Caco-2 (cell line): ENCODE measurements at regions of chr9 and their contacts with region 1.

Region 1: GRCh38 chr9:129610473-129611301 is 10.2 kb downstream of the C9orf50 start:
- DNase-seq: peak; percentile 81 to 85
- H3K4me3 ChIP-seq: peak overlapping the region; percentile 67
- H3K4me3 Mint-ChIP-seq: peak overlapping the region; percentile 78
- H3K27ac Mint-ChIP-seq: peak overlapping the region; percentile 59
- H3K4me1 ChIP-seq: peaks cover 19% of the 10 kb centered on the region; the same call in 1 of the 2 replicates
- H3K4me1 Mint-ChIP-seq: peaks cover 9% of the 10 kb centered on the region
- H3K27me3 ChIP-seq: no peaks in the 10 kb centered on the region
- H3K27me3 Mint-ChIP-seq: no peaks in the 10 kb centered on the region
- CTCF ChIP-seq: peak; percentile 85 to 98

Region 2: DNA sequence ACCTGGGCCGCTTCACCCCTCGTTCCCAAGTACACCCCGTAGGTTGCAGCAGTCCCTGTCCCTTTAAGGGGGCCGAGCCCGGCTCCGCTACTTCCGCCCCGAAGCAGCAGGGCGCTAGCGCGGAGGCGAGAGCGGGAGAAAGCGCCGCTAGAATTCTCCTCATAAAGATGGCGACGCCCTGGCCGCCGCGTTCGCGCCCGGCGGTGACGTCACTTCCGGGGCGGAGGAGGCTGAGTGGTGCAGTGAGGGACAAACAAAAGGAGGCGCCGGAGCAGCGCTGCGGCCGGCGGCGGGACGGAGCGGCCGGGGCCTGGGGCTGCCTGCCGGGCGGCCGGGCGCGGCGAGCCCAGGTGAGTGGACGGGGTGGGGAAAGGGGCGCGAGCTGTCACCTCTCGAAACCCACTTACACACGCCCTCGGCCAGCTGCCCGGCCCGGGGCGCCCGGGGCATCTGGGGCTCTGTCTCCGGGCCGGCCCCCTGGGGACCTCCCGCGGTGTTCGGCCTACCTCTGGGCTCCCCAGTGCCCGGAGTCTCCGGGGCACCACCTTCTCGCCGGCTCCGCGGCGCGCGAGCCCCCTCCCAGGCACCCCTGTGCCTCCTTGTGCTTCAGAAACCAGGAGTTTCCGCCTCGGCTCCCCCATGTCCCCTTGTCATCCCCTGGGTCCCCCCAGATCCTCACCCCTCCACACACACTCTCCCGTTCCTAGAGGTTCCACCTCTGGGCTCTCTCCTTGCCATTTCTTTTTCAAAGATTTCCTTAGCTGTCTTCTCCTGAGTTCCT is 728.6 kb before region 1 on chr9 and contains the starts of genes KYAT1 and LRRC8A:
- CTCF ChIA-PET with region 1: no interaction called
- POLR2A ChIA-PET with region 1: no interaction called
- intact Hi-C with region 1: no loop called
- DNase-seq: peak; percentile 95 to 97
- H3K4me3 ChIP-seq: peak within 1 kb of the TSS; percentile 69
- H3K4me3 Mint-ChIP-seq: peak within 1 kb of the TSS; percentile 97
- H3K27ac Mint-ChIP-seq: peak within 1 kb of the TSS; percentile 96
- H3K4me1 ChIP-seq: peaks cover 16% of the 10 kb centered on the region
- H3K4me1 Mint-ChIP-seq: peaks cover 6% of the 10 kb centered on the region
- H3K27me3 ChIP-seq: no peaks in the 10 kb centered on the region
- H3K27me3 Mint-ChIP-seq: no peaks in the 10 kb centered on the region
- CTCF ChIP-seq: peak in 1 of 2 experiments; percentile 1
- total RNA-seq, gene KYAT1: 6.9 and 7.8 TPM in 2 replicates
- total RNA-seq, gene LRRC8A: 21.9 and 22.4 TPM in 2 replicates

Region 3: GRCh38 chr9:129139993-129140396 is 470.7 kb before region 1 on chr9:
- CTCF ChIA-PET with region 1: interaction called, 5 read pairs
- POLR2A ChIA-PET with region 1: no interaction called
- intact Hi-C with region 1: loop called (anchors 2 kb)
- DNase-seq: peak; percentile 41 to 85
- H3K4me3 ChIP-seq: peak overlapping the region; percentile 21
- H3K4me3 Mint-ChIP-seq: peak overlapping the region; percentile 64
- H3K27ac Mint-ChIP-seq: peak overlapping the region; percentile 95
- H3K4me1 ChIP-seq: peaks cover 51% of the 10 kb centered on the region
- H3K4me1 Mint-ChIP-seq: peaks cover 29% of the 10 kb centered on the region
- H3K27me3 ChIP-seq: no peaks in the 10 kb centered on the region
- H3K27me3 Mint-ChIP-seq: no peaks in the 10 kb centered on the region
- CTCF ChIP-seq: peak in 1 of 2 experiments; percentile 0

Region 4: GRCh38 chr9:129333953-129334724 is 276.5 kb before region 1 on chr9:
- CTCF ChIA-PET with region 1: no interaction called
- POLR2A ChIA-PET with region 1: no interaction called
- intact Hi-C with region 1: loop called (anchors 5 kb)
- DNase-seq: peak; percentile 97 to 99
- H3K4me3 ChIP-seq: peak overlapping the region; percentile 11
- H3K4me3 Mint-ChIP-seq: peak overlapping the region; percentile 68
- H3K27ac Mint-ChIP-seq: peak overlapping the region; percentile 98
- H3K4me1 ChIP-seq: peaks cover 27% of the 10 kb centered on the region
- H3K4me1 Mint-ChIP-seq: peaks cover 19% of the 10 kb centered on the region
- H3K27me3 ChIP-seq: no peaks in the 10 kb centered on the region
- H3K27me3 Mint-ChIP-seq: no peaks in the 10 kb centered on the region
- CTCF ChIP-seq: peak; percentile 22 to 31

Region 5: DNA sequence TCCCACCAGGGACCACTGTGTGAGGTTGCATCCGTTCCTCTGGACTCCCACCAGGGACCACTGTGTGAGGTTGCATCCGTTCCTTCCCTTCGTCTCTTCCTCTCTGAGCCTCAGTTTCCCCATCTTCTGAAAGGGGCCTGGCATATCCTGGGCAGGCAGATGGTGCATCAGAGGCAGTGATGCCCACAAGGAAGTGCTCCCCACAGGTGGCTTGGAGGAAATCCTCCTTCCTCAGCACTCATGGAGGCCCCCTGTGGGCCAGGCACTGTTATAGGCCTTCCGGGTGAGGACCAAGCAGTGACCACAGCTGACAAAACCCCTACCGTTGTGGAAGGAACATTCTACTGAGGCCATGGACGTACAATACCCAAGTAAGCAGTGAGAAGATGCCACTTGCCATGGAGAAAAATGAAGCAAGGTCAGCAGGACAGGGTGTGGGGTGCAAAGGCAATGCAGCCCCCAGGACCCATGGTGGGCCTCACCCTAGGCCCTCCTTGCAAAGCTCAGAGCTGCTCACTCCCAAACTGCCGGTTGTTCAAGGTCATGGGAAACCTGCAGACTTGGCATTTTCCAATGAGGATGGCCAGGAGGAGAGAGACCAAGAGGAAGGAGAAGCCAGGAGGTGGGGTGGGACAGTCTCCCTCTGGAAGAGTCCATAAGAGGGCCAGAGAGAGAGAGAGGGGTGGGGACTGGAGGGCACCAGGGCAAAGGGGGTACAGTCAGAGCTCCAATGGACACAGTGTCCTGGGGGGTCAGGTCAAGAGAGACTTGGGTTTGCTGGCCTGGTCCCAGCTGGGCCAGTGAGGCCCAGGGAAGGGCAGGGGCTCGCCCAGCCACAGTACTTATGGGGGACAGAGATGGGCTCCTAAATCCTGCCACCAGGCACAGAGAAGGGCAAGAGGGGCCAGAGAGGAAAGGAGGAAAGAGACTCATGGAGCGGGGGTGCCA is 40.9 kb before region 1 on chr9:
- CTCF ChIA-PET with region 1: no interaction called
- POLR2A ChIA-PET with region 1: no interaction called
- intact Hi-C with region 1: loop called (anchors 2 kb)
- DNase-seq: peak; percentile 56 to 65
- H3K4me3 ChIP-seq: peak overlapping the region; percentile 43
- H3K4me3 Mint-ChIP-seq: peak overlapping the region; percentile 75
- H3K27ac Mint-ChIP-seq: peak overlapping the region; percentile 88
- H3K4me1 ChIP-seq: peaks cover 28% of the 10 kb centered on the region
- H3K4me1 Mint-ChIP-seq: peaks cover 27% of the 10 kb centered on the region
- H3K27me3 ChIP-seq: no peaks in the 10 kb centered on the region
- H3K27me3 Mint-ChIP-seq: no peaks in the 10 kb centered on the region
- CTCF ChIP-seq: peak; percentile 35 to 53

Region 6: GRCh38 chr9:129626079-129626624 is 15.5 kb after region 1 on chr9 and contains the start of gene NTMT1:
- CTCF ChIA-PET with region 1: interaction called, 12 read pairs
- POLR2A ChIA-PET with region 1: no interaction called
- intact Hi-C with region 1: loop called (anchors 1 kb)
- DNase-seq: peak; percentile 81 to 89
- H3K4me3 ChIP-seq: peak within 1 kb of the TSS; percentile 56
- H3K4me3 Mint-ChIP-seq: peak within 1 kb of the TSS; percentile 90
- H3K27ac Mint-ChIP-seq: peak within 1 kb of the TSS; percentile 81
- H3K4me1 ChIP-seq: peaks cover 11% of the 10 kb centered on the region
- H3K4me1 Mint-ChIP-seq: peaks cover 2% of the 10 kb centered on the region
- H3K27me3 ChIP-seq: no peaks in the 10 kb centered on the region
- H3K27me3 Mint-ChIP-seq: no peaks in the 10 kb centered on the region
- CTCF ChIP-seq: no peak
- total RNA-seq, gene NTMT1: 44.1 and 51.6 TPM in 2 replicates

Region 7: GRCh38 chr9:129712634-129713401 is 102.1 kb after region 1 on chr9:
- CTCF ChIA-PET with region 1: no interaction called
- POLR2A ChIA-PET with region 1: no interaction called
- intact Hi-C with region 1: no loop called
- DNase-seq: no peak
- H3K4me3 ChIP-seq: no peak overlapping the region
- H3K4me3 Mint-ChIP-seq: no peak overlapping the region
- H3K27ac Mint-ChIP-seq: no peak overlapping the region
- H3K4me1 ChIP-seq: no peaks in the 10 kb centered on the region
- H3K4me1 Mint-ChIP-seq: no peaks in the 10 kb centered on the region
- H3K27me3 ChIP-seq: no peaks in the 10 kb centered on the region
- H3K27me3 Mint-ChIP-seq: peaks cover 3% of the 10 kb centered on the region
- CTCF ChIP-seq: no peak